ENCODE measurements at regions of chr16 and their contacts with region 1.

Region 1: DNA sequence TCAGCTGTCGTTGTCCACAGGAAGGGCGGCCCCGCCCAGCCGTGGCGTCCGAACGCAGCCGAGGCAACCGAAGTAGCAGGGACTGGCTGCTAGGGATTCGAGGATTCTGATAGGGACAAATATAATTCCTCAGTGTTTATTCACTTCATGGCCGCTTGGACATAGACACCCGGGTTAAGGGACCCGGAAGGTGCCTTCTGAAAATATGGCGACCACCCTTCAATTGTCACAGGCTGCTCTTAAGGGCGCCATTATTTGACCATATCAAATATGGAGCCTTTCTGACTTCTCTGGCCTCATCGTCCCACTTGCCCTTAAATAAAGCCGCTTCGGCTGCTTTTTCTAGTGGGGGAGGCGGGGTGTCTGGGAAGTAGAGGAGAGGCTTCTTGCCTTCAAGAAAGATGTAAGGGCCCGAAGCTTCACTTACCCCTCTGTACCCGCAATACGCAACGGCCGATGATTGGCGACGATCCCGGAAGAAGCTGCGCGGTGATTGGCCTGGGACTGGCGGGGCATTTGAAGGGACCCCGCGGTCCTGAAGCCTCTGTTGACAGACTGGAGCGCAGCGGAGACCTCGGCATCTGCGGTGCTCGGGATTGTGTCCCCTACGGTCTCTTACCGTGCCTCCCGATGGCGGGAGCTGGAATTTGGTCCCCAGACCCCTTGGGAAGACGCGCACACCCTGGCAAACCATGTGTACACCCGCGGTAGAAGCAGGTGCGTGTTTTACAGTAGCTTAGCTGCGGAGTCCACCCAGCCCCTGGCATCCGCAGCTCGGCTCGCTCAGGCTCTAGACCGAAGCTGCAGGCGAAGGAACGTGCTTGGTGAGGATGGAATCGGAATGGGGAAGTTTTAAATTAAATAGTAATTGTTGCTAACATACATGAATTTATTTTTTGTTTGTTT is at the start of gene ZNF688:
- DNase-seq: peak; percentile 96
- total RNA-seq, gene ZNF688: 12.1 TPM

Region 2: GRCh38 chr16:30521873-30522641 is 49.9 kb before region 1 on chr16:
- intact Hi-C with region 1: no loop called
- DNase-seq: no peak

Region 3: DNA sequence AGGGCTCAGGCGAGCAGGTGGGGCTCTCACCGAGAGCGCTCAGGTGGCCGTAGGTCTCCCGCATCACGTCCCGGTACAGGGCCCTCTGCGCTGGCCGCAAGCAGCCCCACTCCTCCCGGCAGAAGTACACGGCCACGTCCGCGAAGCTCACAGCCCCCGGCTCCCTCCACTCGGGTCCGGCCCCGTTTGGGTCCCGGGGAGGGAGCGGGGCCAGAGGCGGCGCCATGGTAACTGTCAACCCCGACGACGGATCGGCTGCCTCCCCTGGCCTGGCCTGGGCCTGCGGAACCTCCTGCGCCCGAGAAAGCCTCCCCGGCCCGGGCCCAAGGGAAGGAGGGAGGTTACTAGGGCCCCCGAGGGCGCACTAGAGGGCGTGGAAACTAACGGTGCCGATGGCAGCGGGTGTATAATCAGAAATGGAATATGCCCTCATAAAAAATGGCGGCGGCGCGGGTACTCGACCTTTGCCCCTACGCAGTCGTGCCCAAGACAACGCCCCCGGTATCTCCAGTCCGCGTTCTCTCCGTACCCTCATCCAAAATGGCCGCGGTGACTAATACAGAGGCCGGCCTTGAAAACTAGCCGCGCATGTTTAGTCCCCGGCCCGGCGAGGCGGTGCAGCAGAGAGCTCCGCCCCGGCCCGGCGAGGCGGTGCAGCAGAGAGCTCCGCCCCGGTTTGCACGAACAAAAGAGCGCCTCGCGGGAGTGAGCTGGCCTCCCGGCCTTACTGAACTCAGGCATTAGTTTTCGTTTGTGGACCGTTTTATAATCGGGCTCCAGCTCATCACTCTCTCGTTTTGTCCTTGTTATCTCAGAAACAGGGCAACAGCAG is 13.8 kb before region 1 on chr16 and contains the start of gene ZNF764:
- intact Hi-C with region 1: loop called (anchors 1 kb)
- DNase-seq: peak; percentile 100
- total RNA-seq, gene ZNF764: 11.4 TPM

Region 4: GRCh38 chr16:30585400-30586189 is 13.6 kb after region 1 on chr16 and contains the start of gene ZNF785:
- intact Hi-C with region 1: loop called (anchors 1 kb)
- DNase-seq: peak; percentile 98
- total RNA-seq, gene ZNF785: 6.7 TPM

Region 5: GRCh38 chr16:30609926-30610839 is 38.2 kb after region 1 on chr16 and contains the start of gene ZNF689:
- intact Hi-C with region 1: no loop called
- DNase-seq: peak; percentile 97
- total RNA-seq, gene ZNF689: 4.9 TPM

Measured in cardiac septum (tissue), 1 donor.